ENCODE measurements at regions of chr13 and their contacts with region 1.

Region 1: GRCh38 chr13:48975856-48976575 is at the start of gene FNDC3A:
- DNase-seq: peak; percentile 91
- H3K4me3 Mint-ChIP-seq: peak within 1 kb of the TSS; percentile 93
- H3K27ac Mint-ChIP-seq: peak within 1 kb of the TSS; percentile 98
- H3K4me1 Mint-ChIP-seq: peaks cover 43% of the 10 kb centered on the region
- H3K27me3 Mint-ChIP-seq: no peaks in the 10 kb centered on the region
- total RNA-seq, gene FNDC3A: 21.1 to 21.6 TPM

Region 2: GRCh38 chr13:48037346-48038173 is 938.5 kb before region 1 on chr13 and contains the start of gene NUDT15:
- CTCF ChIA-PET with region 1: no interaction called
- POLR2A ChIA-PET with region 1: no interaction called
- intact Hi-C with region 1: loop called (anchors 5 kb)
- DNase-seq: peak; percentile 97
- H3K4me3 Mint-ChIP-seq: peak within 1 kb of the TSS; percentile 96
- H3K27ac Mint-ChIP-seq: peak within 1 kb of the TSS; percentile 98
- H3K4me1 Mint-ChIP-seq: peaks cover 29% of the 10 kb centered on the region
- H3K27me3 Mint-ChIP-seq: no peaks in the 10 kb centered on the region
- total RNA-seq, gene NUDT15: 18.5 to 19.2 TPM

Region 3: DNA sequence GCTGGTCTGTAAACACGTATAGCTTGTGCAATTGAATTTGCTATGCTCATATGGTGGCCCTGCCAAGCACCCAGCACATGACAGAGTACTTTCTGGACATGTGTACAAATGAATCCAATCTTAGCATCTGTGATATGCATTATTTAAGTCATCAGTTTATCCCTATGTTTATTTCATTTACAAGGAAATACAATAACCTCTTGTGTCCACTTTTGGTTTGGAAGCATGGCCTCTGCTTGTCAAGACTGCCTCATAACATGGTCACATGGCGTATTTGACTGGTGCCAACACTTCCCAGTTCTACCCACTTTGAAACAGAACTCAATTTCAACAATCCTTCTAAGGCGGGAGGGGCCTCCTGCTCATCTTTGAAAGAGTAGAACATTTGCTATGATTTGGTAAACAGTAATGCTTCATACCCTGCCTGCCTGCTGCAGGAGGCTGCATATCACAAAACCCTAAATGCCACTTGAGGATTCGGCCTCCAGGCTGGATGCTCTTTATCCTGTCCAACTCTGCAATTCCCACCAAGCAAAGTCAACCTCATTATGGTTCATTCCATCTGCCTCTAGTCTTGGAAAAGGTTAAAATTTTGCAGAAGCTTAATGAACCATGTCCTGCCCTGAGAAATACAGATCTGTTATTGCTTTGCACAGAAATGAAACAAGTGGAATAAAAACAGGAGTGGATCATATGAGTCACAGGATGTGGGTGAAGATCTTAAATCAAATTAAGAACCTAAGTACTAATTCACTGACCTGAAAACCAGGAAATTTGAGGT is 171.0 kb before region 1 on chr13:
- CTCF ChIA-PET with region 1: no interaction called
- POLR2A ChIA-PET with region 1: no interaction called
- intact Hi-C with region 1: loop called (anchors 2 kb)
- DNase-seq: peak; percentile 15
- H3K4me3 Mint-ChIP-seq: no peak overlapping the region
- H3K27ac Mint-ChIP-seq: peak overlapping the region; percentile 26
- H3K4me1 Mint-ChIP-seq: peaks cover 30% of the 10 kb centered on the region
- H3K27me3 Mint-ChIP-seq: no peaks in the 10 kb centered on the region

Region 4: GRCh38 chr13:48828962-48829421 is 147.0 kb before region 1 on chr13:
- CTCF ChIA-PET with region 1: no interaction called
- POLR2A ChIA-PET with region 1: interaction called, 3 read pairs
- intact Hi-C with region 1: loop called (anchors 2 kb)
- DNase-seq: no peak
- H3K4me3 Mint-ChIP-seq: no peak overlapping the region
- H3K27ac Mint-ChIP-seq: no peak overlapping the region
- H3K4me1 Mint-ChIP-seq: peaks cover 38% of the 10 kb centered on the region
- H3K27me3 Mint-ChIP-seq: no peaks in the 10 kb centered on the region

Region 5: DNA sequence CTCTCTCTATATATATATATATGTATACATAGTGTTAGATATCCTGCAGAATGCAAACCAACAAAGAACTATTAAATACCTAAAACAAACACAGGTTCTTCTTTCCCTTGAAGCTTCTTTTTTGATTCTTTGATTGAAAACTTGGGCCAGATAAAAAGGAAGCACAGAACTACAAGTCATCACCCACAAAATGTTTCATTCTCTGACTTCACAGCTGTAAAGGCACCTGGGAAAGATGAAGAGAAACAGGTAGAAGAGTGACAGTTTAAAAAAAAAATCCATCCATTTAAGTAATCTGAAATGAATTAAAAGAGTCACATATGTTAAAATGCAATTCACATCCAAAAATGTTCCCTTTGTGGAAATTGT is 91.0 kb before region 1 on chr13:
- CTCF ChIA-PET with region 1: no interaction called
- POLR2A ChIA-PET with region 1: interaction called, 11 read pairs
- intact Hi-C with region 1: loop called (anchors 1 kb)
- DNase-seq: no peak
- H3K4me3 Mint-ChIP-seq: no peak overlapping the region
- H3K27ac Mint-ChIP-seq: peak overlapping the region; percentile 78
- H3K4me1 Mint-ChIP-seq: peaks cover 52% of the 10 kb centered on the region
- H3K27me3 Mint-ChIP-seq: peaks cover 3% of the 10 kb centered on the region

Region 6: GRCh38 chr13:49495783-49496762 is 520.1 kb after region 1 on chr13 and contains the start of gene PHF11:
- CTCF ChIA-PET with region 1: no interaction called
- POLR2A ChIA-PET with region 1: no interaction called
- intact Hi-C with region 1: loop called (anchors 5 kb)
- DNase-seq: peak; percentile 95
- H3K4me3 Mint-ChIP-seq: peak within 1 kb of the TSS; percentile 91
- H3K27ac Mint-ChIP-seq: peak within 1 kb of the TSS; percentile 98
- H3K4me1 Mint-ChIP-seq: peaks cover 52% of the 10 kb centered on the region
- H3K27me3 Mint-ChIP-seq: no peaks in the 10 kb centered on the region
- total RNA-seq, gene PHF11: 89.2 to 99.4 TPM

Region 7: DNA sequence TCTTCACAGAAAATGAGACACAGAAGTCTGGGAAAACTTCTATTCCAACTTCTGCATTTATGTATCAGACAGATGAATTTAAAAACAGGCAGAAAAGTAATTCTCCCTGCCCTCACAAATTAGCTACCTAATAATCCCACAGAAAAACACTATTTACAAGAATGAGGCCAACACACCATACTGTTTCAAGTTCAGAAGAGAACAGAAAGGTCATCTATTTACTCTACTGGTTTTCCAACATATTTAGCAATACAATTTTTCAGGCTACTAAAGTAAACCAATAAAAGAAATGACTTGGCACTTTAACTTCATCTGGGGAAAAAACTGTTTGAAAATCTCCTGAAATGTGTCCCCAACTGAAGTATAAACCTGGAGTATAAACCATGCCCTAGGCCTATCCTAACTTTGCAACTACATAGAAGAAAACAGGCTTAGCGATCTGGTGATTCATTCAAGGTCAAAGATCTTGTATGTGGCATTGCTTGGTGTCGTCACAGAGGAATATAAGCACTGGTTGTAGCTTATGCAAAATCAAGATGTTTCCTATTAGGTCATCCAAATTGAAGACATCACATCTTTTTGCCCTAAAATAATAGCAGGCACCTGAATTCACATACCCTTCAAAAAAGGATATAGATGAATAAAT is 735.3 kb after region 1 on chr13:
- CTCF ChIA-PET with region 1: no interaction called
- POLR2A ChIA-PET with region 1: no interaction called
- intact Hi-C with region 1: no loop called
- DNase-seq: no peak
- H3K4me3 Mint-ChIP-seq: no peak overlapping the region
- H3K27ac Mint-ChIP-seq: no peak overlapping the region
- H3K4me1 Mint-ChIP-seq: peaks cover 3% of the 10 kb centered on the region
- H3K27me3 Mint-ChIP-seq: no peaks in the 10 kb centered on the region